Stomach (tissue), 19 donors: ENCODE measurements at regions of chr6 and their contacts with region 1.

Region 1: GRCh38 chr6:28683944-28684538 is 158.4 kb downstream of the GPX5 start:
- DNase-seq: peak in 1 of 2 donors; percentile 50
- H3K4me3 ChIP-seq: no peak overlapping the region
- H3K27ac ChIP-seq: no peak overlapping the region
- H3K4me1 ChIP-seq: peaks cover 0 to 14% (median 3%) of the 10 kb centered on the region in 4 donors
- H3K27me3 ChIP-seq: peaks cover 0 to 85% (median 28%) of the 10 kb centered on the region in 3 donors
- CTCF ChIP-seq: peak in 3 of 7 experiments; percentile 6 to 26 (median 16)
- EP300 ChIP-seq: no peak
- POLR2A ChIP-seq: no peak

Region 2: DNA sequence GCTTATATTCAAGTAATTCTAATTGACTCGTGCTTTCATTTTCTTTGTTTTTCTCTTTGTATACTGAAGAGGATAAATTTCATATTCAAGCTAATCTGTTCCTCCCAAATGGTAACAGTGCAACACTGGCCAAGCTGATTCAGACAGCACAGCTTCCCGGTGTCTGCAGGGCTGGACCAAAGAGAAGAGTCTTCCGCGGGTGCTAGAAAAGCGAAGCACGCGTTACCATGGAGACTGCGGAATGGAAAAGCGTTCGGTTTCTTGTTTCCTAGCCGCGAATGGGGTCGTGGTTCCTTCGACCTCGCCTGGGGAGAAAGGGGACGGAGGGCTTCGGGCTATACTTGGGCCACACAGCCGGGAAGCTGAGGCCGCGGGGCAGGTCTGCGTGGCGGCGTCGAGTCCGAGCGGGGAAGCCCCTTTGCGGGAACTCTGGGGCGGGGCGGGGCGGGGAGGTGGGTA is 327.3 kb after region 1 on chr6:
- intact Hi-C with region 1: loop called (anchors 5 kb)
- DNase-seq: peak in 1 of 2 donors; percentile 87
- H3K4me3 ChIP-seq: peak overlapping the region; percentile 40 to 49 (median 45)
- H3K27ac ChIP-seq: peak overlapping the region in 1 of 5 donors; percentile 65
- H3K4me1 ChIP-seq: peaks cover 0 to 21% (median 11%) of the 10 kb centered on the region in 4 donors
- H3K27me3 ChIP-seq: peaks cover 5 to 50% (median 25%) of the 10 kb centered on the region in 3 donors
- CTCF ChIP-seq: no peak
- EP300 ChIP-seq: no peak
- POLR2A ChIP-seq: no peak

Region 3: GRCh38 chr6:29589423-29590048 is 905.5 kb after region 1 on chr6:
- intact Hi-C with region 1: loop called (anchors 5 kb)
- DNase-seq: peak; percentile 34 to 75
- H3K4me3 ChIP-seq: no peak overlapping the region
- H3K27ac ChIP-seq: no peak overlapping the region
- H3K4me1 ChIP-seq: no peaks in the 10 kb centered on the region
- H3K27me3 ChIP-seq: peaks cover 4 to 39% (median 6%) of the 10 kb centered on the region in 3 donors
- CTCF ChIP-seq: peak in 5 of 7 experiments; percentile 89 to 95 (median 91)
- EP300 ChIP-seq: no peak
- POLR2A ChIP-seq: no peak